ENCODE measurements at regions of chr20 and their contacts with region 1.

Region 1: GRCh38 chr20:56395166-56395565 is 2.7 kb downstream of the CSTF1 start:
- DNase-seq: no peak
- H3K4me3 Mint-ChIP-seq: no peak overlapping the region
- H3K27ac Mint-ChIP-seq: peak overlapping the region; percentile 54
- H3K4me1 Mint-ChIP-seq: peaks cover 55% of the 10 kb centered on the region
- H3K27me3 Mint-ChIP-seq: no peaks in the 10 kb centered on the region

Region 2: GRCh38 chr20:56222196-56222595 is 173.0 kb before region 1 on chr20:
- CTCF ChIA-PET with region 1: no interaction called
- POLR2A ChIA-PET with region 1: no interaction called
- DNase-seq: no peak
- H3K4me3 Mint-ChIP-seq: no peak overlapping the region
- H3K27ac Mint-ChIP-seq: no peak overlapping the region
- H3K4me1 Mint-ChIP-seq: no peaks in the 10 kb centered on the region
- H3K27me3 Mint-ChIP-seq: peaks cover 2% of the 10 kb centered on the region

Region 3: DNA sequence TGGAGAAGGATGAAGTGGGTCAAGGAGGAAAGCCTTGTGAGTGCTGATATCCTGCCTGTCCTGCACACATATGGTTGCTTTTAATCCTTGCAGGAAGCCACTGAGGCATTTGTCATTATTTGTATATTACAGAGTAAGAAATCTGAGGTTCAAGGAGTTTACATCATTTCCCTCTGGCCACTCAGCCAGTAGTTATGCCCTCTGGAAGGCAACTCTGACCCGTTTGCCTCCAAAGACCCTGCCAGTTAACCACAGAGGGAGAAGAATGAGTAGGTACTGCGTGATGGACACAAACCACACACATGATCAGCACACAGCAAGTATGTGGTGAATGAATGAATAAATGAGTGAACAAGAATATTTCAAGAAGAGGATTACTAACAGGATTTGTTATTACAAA is 44.3 kb before region 1 on chr20:
- CTCF ChIA-PET with region 1: no interaction called
- POLR2A ChIA-PET with region 1: no interaction called
- DNase-seq: no peak
- H3K4me3 Mint-ChIP-seq: no peak overlapping the region
- H3K27ac Mint-ChIP-seq: no peak overlapping the region
- H3K4me1 Mint-ChIP-seq: no peaks in the 10 kb centered on the region
- H3K27me3 Mint-ChIP-seq: peaks cover 23% of the 10 kb centered on the region

Region 4: GRCh38 chr20:56411759-56412472 is 16.8 kb after region 1 on chr20 and contains the start of gene CASS4:
- CTCF ChIA-PET with region 1: interaction called, 14 read pairs
- POLR2A ChIA-PET with region 1: interaction called, 3 read pairs
- DNase-seq: peak; percentile 56
- H3K4me3 Mint-ChIP-seq: peak within 1 kb of the TSS; percentile 78
- H3K27ac Mint-ChIP-seq: peak within 1 kb of the TSS; percentile 91
- H3K4me1 Mint-ChIP-seq: peaks cover 55% of the 10 kb centered on the region
- H3K27me3 Mint-ChIP-seq: no peaks in the 10 kb centered on the region
- total RNA-seq, gene CASS4: 8.6 to 9.0 TPM

Region 5: DNA sequence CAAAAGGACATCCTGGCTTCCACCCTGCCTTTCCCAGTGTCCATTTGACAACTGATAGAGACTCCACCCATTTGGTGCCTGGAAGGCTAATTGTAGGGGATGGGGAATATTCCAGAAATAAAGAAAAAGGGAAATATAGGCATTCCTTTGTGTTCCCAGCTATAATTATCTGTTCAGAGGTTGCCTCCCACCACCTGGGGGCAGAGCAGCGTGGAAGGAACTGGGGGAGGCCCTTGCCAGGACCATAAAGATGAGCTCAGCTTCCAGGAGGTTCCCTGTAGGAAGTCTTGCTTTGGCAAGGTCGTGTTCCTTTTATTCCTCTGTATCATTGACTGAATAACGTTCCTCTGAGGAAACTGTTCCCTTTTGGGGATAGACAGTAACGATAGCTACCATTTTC is 448.7 kb after region 1 on chr20:
- CTCF ChIA-PET with region 1: no interaction called
- POLR2A ChIA-PET with region 1: no interaction called
- DNase-seq: no peak
- H3K4me3 Mint-ChIP-seq: no peak overlapping the region
- H3K27ac Mint-ChIP-seq: no peak overlapping the region
- H3K4me1 Mint-ChIP-seq: no peaks in the 10 kb centered on the region
- H3K27me3 Mint-ChIP-seq: no peaks in the 10 kb centered on the region